Panc1 (cell line): ENCODE measurements at regions of chr17 and their contacts with region 1.

Region 1: DNA sequence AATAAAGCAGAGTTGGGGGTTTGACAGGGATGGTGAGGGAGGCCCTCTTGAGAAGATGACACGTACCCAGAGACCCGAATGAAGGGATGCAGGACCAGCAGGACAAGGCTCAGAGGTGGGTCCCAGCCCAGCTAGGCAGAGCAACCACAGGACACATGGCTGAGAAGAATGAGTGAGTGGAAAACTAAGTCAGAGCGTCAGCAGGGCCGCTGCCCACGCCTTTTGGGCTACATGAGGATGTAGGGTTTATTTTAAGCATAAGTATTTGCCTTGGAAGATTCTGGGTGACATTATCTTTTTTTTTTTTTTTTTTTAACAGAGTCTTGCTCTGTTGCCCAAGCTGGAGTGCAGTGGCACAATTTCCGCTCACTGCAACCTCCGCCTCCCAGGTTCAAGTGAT is 176.0 kb downstream of the TMEM132E start:
- DNase-seq: no peak
- ATAC-seq: no peak
- H3K4me3 ChIP-seq: no peak overlapping the region
- H3K27ac ChIP-seq: no peak overlapping the region
- H3K4me1 ChIP-seq: no peaks in the 10 kb centered on the region
- H3K27me3 ChIP-seq: no peaks in the 10 kb centered on the region; the same call in 1 of the 2 replicates
- CTCF ChIP-seq: no peak

Region 2: GRCh38 chr17:34799751-34800150 is 44.4 kb after region 1 on chr17:
- CTCF ChIA-PET with region 1: interaction called, 11 read pairs
- POLR2A ChIA-PET with region 1: no interaction called
- in situ Hi-C with region 1: no loop called
- intact Hi-C with region 1: no loop called
- DNase-seq: no peak
- ATAC-seq: no peak
- H3K4me3 ChIP-seq: no peak overlapping the region
- H3K27ac ChIP-seq: no peak overlapping the region
- H3K4me1 ChIP-seq: no peaks in the 10 kb centered on the region
- H3K27me3 ChIP-seq: peaks cover 10% of the 10 kb centered on the region; the same call in 1 of the 2 replicates
- CTCF ChIP-seq: no peak

Region 3: GRCh38 chr17:34826332-34826731 is 71.0 kb after region 1 on chr17:
- CTCF ChIA-PET with region 1: no interaction called
- POLR2A ChIA-PET with region 1: no interaction called
- in situ Hi-C with region 1: no loop called
- intact Hi-C with region 1: no loop called
- DNase-seq: peak; percentile 41
- ATAC-seq: peak; percentile 68
- H3K4me3 ChIP-seq: no peak overlapping the region
- H3K27ac ChIP-seq: no peak overlapping the region
- H3K4me1 ChIP-seq: no peaks in the 10 kb centered on the region; the same call in 1 of the 2 replicates
- H3K27me3 ChIP-seq: peaks cover 2% of the 10 kb centered on the region; the same call in 1 of the 2 replicates
- CTCF ChIP-seq: no peak